Transverse colon (tissue), 4 donors: ENCODE measurements at regions of chr7 and their contacts with region 1.

Region 1: GRCh38 chr7:116236020-116236630 is 25.8 kb downstream of the TES start:
- DNase-seq: peak; percentile 48
- H3K4me3 ChIP-seq: no peak overlapping the region
- H3K27ac ChIP-seq: peak overlapping the region in 3 of 4 donors; percentile 59 to 96 (median 82)
- H3K4me1 ChIP-seq: peaks cover 12 to 66% (median 27%) of the 10 kb centered on the region in 4 donors
- H3K27me3 ChIP-seq: no peaks in the 10 kb centered on the region
- CTCF ChIP-seq: peak; percentile 43 to 72 (median 54)
- EP300 ChIP-seq: no peak
- POLR2A ChIP-seq: no peak

Region 2: DNA sequence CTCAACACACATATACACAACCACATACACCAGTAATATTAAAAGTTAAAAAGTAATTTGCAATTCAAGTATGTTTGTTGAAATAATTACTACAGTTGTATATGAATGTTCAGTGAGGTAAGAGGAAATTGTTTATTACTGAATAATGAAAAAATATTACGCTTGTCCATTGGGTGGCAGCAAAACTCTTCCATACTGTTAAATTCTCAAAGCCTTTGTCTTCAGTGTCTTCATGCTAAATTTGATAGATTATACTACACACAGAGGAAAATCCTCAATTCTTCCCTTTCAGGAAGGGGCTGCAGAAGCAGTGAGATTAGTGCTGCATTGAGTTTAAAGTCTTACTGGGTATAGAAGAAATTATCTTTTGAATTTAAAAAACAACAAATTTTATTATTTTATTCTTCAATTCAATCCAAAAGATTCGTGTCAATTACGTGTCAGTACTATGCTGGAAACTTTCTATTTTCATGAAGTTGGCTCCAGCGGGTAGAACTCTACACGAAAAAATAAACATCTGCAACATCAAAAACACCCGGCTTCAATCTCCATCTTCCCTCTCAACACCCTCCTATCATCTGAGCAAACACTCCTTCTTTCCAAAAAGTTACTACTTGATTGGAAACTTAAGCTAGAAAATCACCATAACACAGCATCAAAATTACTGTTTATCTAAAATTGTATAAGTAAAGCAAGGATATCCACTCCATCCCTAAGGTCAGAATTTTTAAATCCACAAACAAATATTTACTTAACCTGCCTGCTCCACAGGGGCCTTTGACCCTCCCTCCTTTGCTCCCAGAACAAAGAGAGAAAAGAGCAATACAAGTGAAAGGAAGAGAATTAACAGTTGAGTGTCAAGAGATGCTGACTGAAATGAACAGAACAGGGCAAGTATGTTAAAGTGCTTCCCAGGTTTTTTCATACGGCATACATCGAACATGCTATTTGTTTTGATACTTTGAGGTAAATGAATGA is 62.8 kb before region 1 on chr7:
- in situ Hi-C with region 1: loop called in 2 of 4 experiments (anchors 5 kb)
- intact Hi-C with region 1: no loop called
- DNase-seq: no peak
- H3K4me3 ChIP-seq: no peak overlapping the region
- H3K27ac ChIP-seq: no peak overlapping the region
- H3K4me1 ChIP-seq: peaks cover 0 to 15% (median 6%) of the 10 kb centered on the region in 4 donors
- H3K27me3 ChIP-seq: no peaks in the 10 kb centered on the region
- CTCF ChIP-seq: peak; percentile 43 to 71 (median 51)
- EP300 ChIP-seq: no peak
- POLR2A ChIP-seq: no peak

Region 3: DNA sequence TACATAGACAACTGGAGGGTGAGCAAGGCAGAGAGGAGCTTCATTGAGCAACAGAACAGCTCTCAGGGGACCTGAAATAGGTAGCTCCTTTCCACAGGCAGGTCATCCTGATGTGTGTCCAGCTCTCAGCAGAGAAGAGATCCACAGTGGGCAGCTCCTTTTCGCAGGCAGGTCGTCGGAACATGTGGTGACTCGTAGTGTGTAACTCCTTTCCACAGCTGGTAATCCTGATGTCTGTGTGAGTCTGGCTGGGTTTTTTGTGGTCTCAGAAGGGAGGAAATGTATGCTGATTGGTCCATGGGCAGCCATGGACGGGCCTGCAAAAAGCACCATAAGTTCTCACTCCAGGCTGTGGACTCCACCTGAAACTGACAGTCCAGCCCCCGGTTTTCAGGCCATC is 50.2 kb before region 1 on chr7:
- in situ Hi-C with region 1: no loop called
- intact Hi-C with region 1: loop called (anchors 5 kb)
- DNase-seq: no peak
- H3K4me3 ChIP-seq: no peak overlapping the region
- H3K27ac ChIP-seq: no peak overlapping the region
- H3K4me1 ChIP-seq: no peaks in the 10 kb centered on the region
- H3K27me3 ChIP-seq: no peaks in the 10 kb centered on the region
- CTCF ChIP-seq: no peak
- EP300 ChIP-seq: no peak
- POLR2A ChIP-seq: no peak